AG04450 (cell line): ENCODE measurements at regions of chr5 and their contacts with region 1.

Region 1: DNA sequence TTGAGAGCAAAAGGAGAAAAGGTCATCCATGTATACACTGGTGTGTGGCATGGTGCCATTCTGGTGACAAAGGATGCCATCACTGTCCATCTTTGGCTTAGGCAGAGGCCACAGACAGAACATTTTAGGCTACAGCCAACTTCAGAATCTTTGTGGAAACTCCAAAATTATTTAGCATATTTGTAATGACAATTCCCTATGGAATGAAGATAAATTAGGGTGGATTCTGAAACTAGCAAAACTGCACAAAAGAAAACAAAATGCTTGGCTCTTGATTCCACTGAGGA is 92.5 kb downstream of the FBXW11 start:
- DNase-seq: no peak
- H3K4me3 ChIP-seq: no peak overlapping the region
- H3K27ac ChIP-seq: no peak overlapping the region
- H3K27me3 ChIP-seq: no peaks in the 10 kb centered on the region
- CTCF ChIP-seq: no peak

Region 2: GRCh38 chr5:171813270-171813669 is 100.7 kb before region 1 on chr5:
- CTCF ChIA-PET with region 1: no interaction called
- POLR2A ChIA-PET with region 1: no interaction called
- DNase-seq: no peak
- H3K4me3 ChIP-seq: no peak overlapping the region
- H3K27ac ChIP-seq: no peak overlapping the region
- H3K27me3 ChIP-seq: peaks cover 24% of the 10 kb centered on the region
- CTCF ChIP-seq: no peak

Region 3: GRCh38 chr5:171893290-171893886 is 20.5 kb before region 1 on chr5:
- CTCF ChIA-PET with region 1: interaction called, 25 read pairs
- POLR2A ChIA-PET with region 1: no interaction called
- DNase-seq: peak; percentile 29
- H3K4me3 ChIP-seq: no peak overlapping the region
- H3K27ac ChIP-seq: no peak overlapping the region
- H3K27me3 ChIP-seq: no peaks in the 10 kb centered on the region
- CTCF ChIP-seq: no peak

Region 4: DNA sequence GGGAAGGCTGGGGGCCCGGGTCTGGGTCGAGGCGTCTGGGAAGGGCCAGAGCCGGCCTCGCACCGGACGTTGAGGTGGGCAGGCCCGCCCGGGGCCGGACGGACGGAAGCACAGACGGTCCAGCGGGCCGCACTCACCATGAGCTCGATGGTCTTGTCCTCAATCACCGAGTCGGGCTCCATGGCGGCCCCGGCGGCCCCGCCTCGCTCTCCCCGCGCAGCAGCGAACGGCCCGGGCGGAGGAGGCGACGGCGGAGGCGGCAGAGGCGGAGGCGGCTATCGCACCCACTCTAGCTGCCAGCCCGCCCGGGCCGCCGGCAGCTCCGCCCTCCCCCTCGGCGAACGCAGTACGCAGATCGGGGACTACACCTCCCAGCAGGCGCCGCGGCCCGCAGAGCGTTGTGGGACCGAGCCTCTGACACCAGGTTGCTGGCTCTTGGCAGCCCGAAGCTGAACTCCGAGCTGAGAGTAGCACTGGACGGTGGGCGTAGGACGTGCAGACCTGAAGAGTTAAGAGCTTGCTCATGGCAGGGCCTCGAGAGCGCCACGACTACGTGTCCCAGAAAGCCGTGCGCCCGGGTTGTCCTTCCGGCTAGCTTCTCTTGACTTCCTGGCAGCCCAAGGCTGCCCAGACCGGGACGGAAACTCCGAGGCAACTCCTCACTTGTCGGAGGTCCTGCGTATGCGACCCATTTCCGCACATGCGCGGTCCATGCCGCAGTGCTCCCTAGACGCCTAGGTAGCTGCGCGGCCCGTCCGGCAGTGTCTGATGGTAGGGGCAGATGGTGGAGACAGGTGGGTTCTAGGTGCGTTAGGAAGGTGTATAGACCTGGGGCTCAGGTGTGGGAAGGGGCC is 92.6 kb after region 1 on chr5 and contains the start of gene FBXW11:
- CTCF ChIA-PET with region 1: interaction called, 59 read pairs
- POLR2A ChIA-PET with region 1: interaction called, 5 read pairs
- DNase-seq: peak; percentile 92
- H3K4me3 ChIP-seq: peak within 1 kb of the TSS; percentile 95
- H3K27ac ChIP-seq: peak within 1 kb of the TSS; percentile 99
- H3K27me3 ChIP-seq: no peaks in the 10 kb centered on the region
- CTCF ChIP-seq: no peak
- polyA plus RNA-seq, gene FBXW11: 68.1 and 77.1 TPM in 2 replicates

Region 5: DNA sequence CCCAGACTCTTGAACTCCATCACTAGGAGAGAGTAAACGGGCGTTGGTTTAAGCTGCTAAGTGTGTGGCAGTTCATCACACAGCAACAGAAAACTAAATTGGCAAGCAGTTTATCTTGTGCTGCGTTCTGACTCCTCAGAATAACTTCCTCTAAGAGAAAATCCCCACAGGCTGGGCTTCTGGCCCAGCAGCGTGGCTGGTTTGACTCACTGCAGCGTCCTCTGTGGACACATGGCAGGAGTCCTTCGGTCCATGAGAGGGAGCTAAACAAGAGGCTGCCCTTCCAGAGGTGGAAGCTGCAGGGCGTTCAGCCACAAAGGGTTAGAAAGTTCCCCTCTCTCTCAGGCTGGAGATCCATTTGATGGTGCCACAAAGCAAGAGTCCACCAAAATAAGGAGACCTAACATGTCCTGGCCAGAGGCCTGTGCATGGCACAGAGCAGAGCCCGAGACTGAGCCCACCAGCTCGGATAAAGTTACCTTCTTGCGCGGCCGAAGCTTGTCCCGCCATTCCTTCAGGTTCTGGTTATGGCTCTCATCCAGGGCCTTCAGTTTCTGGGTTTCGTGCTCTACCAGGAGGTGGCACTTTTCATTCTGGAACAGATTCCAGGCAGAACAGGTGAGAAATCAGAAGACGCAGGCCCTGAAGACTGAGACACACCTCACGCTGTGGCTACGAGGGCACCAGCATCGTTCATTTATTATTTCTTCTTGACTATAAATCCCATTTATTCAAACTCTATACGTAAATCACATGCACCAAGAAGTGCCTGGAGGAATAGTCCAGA is 138.7 kb after region 1 on chr5:
- CTCF ChIA-PET with region 1: interaction called, 16 read pairs
- POLR2A ChIA-PET with region 1: no interaction called
- DNase-seq: peak; percentile 30
- H3K4me3 ChIP-seq: no peak overlapping the region
- H3K27ac ChIP-seq: no peak overlapping the region
- H3K27me3 ChIP-seq: no peaks in the 10 kb centered on the region
- CTCF ChIP-seq: peak; percentile 40

Region 6: GRCh38 chr5:172283020-172283861 is 369.3 kb after region 1 on chr5 and contains the start of gene UBTD2:
- CTCF ChIA-PET with region 1: interaction called, 10 read pairs
- POLR2A ChIA-PET with region 1: no interaction called
- DNase-seq: no peak
- H3K4me3 ChIP-seq: peak within 1 kb of the TSS; percentile 79
- H3K27ac ChIP-seq: peak within 1 kb of the TSS; percentile 68
- H3K27me3 ChIP-seq: no peaks in the 10 kb centered on the region
- CTCF ChIP-seq: peak; percentile 44
- polyA plus RNA-seq, gene UBTD2: 30.2 and 33.3 TPM in 2 replicates